GM12878 (cell line): ENCODE measurements at regions of chr12 and their contacts with region 1.

Region 1: GRCh38 chr12:7018350-7019042 is at the start of gene LPCAT3:
- DNase-seq: peak; percentile 83
- ATAC-seq: peak; percentile 97
- H3K4me3 ChIP-seq: peak within 1 kb of the TSS; percentile 91
- H3K27ac ChIP-seq: peak within 1 kb of the TSS; percentile 75
- H3K4me1 ChIP-seq: no peaks in the 10 kb centered on the region
- H3K27me3 ChIP-seq: no peaks in the 10 kb centered on the region
- CTCF ChIP-seq: peak; percentile 82 to 90 (median 83); a peak in 5 of 6 replicates
- EP300 ChIP-seq: no peak
- POLR2A ChIP-seq: peak; percentile 86
- RAD21 ChIP-seq: peak; percentile 41
- polyA plus RNA-seq, gene LPCAT3: 2.6 to 3.7 TPM

Region 2: DNA sequence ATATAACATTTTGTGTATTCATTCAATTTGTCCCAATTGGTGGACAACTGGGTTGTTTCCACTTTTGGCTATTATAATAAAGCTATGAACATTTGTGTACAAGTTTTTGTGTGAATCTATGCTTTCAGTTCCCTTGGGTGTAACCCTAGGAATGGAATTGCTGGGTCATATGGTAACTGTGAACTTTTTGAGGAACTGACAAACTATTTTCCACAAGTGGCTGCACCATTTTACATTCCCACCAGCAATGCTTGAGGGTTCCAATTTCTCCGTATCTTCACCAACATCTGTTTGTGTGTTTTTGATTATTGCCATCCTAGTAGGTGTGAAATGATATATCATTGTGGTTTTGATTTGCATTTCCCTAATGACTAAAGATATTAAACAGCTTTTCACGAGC is 13.2 kb before region 1 on chr12:
- CTCF ChIA-PET with region 1: interaction called, 6 read pairs
- POLR2A ChIA-PET with region 1: interaction called, 10 read pairs
- RAD21 ChIA-PET with region 1: no interaction called
- SMC1A ChIA-PET with region 1: interaction called, 7 read pairs
- in situ Hi-C with region 1: no loop called
- intact Hi-C with region 1: no loop called
- DNase-seq: no peak
- ATAC-seq: no peak
- H3K4me3 ChIP-seq: no peak overlapping the region
- H3K27ac ChIP-seq: no peak overlapping the region
- H3K4me1 ChIP-seq: no peaks in the 10 kb centered on the region
- H3K27me3 ChIP-seq: no peaks in the 10 kb centered on the region
- CTCF ChIP-seq: no peak
- EP300 ChIP-seq: no peak
- POLR2A ChIP-seq: no peak
- RAD21 ChIP-seq: no peak

Region 3: GRCh38 chr12:7092229-7092985 is 73.9 kb after region 1 on chr12 and contains the start of gene C1R:
- CTCF ChIA-PET with region 1: interaction called, 3 read pairs
- POLR2A ChIA-PET with region 1: no interaction called
- RAD21 ChIA-PET with region 1: no interaction called
- SMC1A ChIA-PET with region 1: no interaction called
- in situ Hi-C with region 1: no loop called
- intact Hi-C with region 1: loop called (anchors 5 kb)
- DNase-seq: no peak
- ATAC-seq: peak; percentile 90
- H3K4me3 ChIP-seq: peak within 1 kb of the TSS; percentile 72; the same call in 1 of the 2 replicates
- H3K27ac ChIP-seq: no peak within 1 kb of the TSS; the same call in 1 of the 2 replicates
- H3K4me1 ChIP-seq: no peaks in the 10 kb centered on the region
- H3K27me3 ChIP-seq: no peaks in the 10 kb centered on the region; a peak in 1 of 4 replicates
- CTCF ChIP-seq: peak; percentile 85 to 89 (median 88)
- EP300 ChIP-seq: no peak
- POLR2A ChIP-seq: no peak; the same call in 1 of the 2 replicates
- RAD21 ChIP-seq: peak; percentile 76
- polyA plus RNA-seq, gene C1R: 0.31 TPM in 1 of 2 experiments, not detected in the other